ENCODE measurements at regions of chr1 and their contacts with region 1.

Region 1: GRCh38 chr1:3721955-3722465 is 30.2 kb upstream of the CCDC27 start:
- DNase-seq: no peak
- ATAC-seq: no peak
- H3K4me3 ChIP-seq: no peak overlapping the region
- H3K27ac ChIP-seq: no peak overlapping the region
- H3K4me1 ChIP-seq: peaks cover 6% of the 10 kb centered on the region; the same call in 1 of the 2 replicates
- H3K27me3 ChIP-seq: no peaks in the 10 kb centered on the region
- CTCF ChIP-seq: no peak
- EP300 ChIP-seq: no peak
- POLR2A ChIP-seq: no peak
- RAD21 ChIP-seq: no peak

Region 2: DNA sequence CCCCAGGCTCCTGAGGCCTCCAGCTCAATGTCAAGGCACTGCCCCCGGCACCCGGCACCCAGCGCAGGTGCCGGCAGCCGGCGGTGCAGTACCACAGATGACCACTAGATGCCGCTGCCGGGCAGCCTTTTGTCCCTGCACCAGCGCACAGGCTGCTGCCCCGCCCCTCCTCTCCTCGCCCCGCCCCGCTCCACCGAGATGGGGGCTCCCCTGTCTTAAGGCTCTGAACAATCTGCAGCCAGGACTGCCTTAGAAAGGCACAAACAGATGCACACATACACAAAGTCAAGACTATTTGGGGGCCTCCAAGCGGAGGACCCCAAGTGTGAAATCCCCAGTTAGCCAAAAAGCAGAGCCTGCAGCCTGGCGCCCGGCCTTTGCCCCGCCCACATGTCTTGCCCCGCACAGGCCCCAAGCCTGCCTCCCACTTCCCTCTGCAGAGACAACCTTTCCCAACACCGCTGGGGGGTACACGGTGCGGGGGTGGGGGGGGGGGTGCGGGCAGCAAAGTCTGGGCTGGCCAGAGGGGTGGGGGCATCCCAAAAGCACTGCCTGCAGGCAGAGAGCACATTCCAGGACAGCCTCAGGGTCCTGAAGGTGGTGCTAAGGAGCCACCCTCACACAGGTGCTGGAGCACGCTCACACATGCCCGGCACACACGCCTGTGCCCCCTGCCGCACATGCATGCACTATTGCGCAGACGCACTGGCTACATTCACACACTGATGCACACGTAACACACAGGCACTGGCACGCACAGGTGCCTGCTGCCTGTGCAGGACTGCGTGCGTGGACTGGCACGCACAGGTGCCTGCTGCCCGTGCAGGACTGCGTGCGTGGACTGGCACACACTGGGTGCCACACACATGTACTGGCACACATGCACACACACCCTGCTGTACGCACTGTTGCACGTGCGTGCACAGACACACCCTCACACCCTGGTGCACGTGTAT is 230.4 kb before region 1 on chr1:
- CTCF ChIA-PET with region 1: no interaction called
- POLR2A ChIA-PET with region 1: no interaction called
- RAD21 ChIA-PET with region 1: interaction called, 3 read pairs
- SMC1A ChIA-PET with region 1: no interaction called
- in situ Hi-C with region 1: no loop called
- intact Hi-C with region 1: loop called (anchors 5 kb)
- DNase-seq: peak; percentile 3
- ATAC-seq: peak; percentile 98
- H3K4me3 ChIP-seq: no peak overlapping the region
- H3K27ac ChIP-seq: no peak overlapping the region
- H3K4me1 ChIP-seq: no peaks in the 10 kb centered on the region
- H3K27me3 ChIP-seq: no peaks in the 10 kb centered on the region
- CTCF ChIP-seq: peak; percentile 90 to 99 (median 95)
- EP300 ChIP-seq: no peak
- POLR2A ChIP-seq: no peak
- RAD21 ChIP-seq: peak; percentile 63

Measured in GM12878 (cell line).